ENCODE measurements at regions of chr6 and their contacts with region 1.

Region 1: GRCh38 chr6:105484238-105485161 is 81.6 kb upstream of the PREP start:
- DNase-seq: peak in 1 of 2 experiments; percentile 50
- H3K4me3 ChIP-seq: no peak overlapping the region
- H3K4me3 Mint-ChIP-seq: peak overlapping the region; percentile 63
- H3K27ac Mint-ChIP-seq: peak overlapping the region; percentile 42
- H3K4me1 ChIP-seq: peaks cover 36% of the 10 kb centered on the region
- H3K4me1 Mint-ChIP-seq: peaks cover 55% of the 10 kb centered on the region
- H3K27me3 ChIP-seq: no peaks in the 10 kb centered on the region
- H3K27me3 Mint-ChIP-seq: no peaks in the 10 kb centered on the region
- CTCF ChIP-seq: peak; percentile 75 to 85

Region 2: DNA sequence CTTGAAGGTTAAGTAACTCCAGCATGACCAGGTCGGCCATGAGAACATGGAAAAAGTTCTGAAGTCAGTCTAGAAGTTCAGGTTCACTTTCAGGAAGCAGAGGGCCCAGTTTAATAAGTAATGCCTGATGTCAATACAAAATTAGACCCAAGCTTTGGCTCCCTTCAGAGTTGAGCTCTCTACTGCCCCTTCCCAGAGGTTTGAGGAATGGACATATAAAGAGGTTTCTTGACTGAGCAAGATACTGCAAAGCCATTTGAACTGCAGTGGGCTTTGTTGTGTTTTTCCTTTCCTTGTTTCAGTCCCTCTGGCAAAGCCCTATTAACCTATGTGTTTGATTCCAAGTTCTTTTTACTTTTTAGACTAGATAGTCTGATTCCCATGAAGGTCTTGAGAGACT is 16.2 kb after region 1 on chr6:
- CTCF ChIA-PET with region 1: no interaction called
- POLR2A ChIA-PET with region 1: no interaction called
- intact Hi-C with region 1: no loop called
- DNase-seq: no peak
- H3K4me3 ChIP-seq: no peak overlapping the region
- H3K4me3 Mint-ChIP-seq: no peak overlapping the region
- H3K27ac Mint-ChIP-seq: no peak overlapping the region
- H3K4me1 ChIP-seq: no peaks in the 10 kb centered on the region
- H3K4me1 Mint-ChIP-seq: no peaks in the 10 kb centered on the region
- H3K27me3 ChIP-seq: no peaks in the 10 kb centered on the region
- H3K27me3 Mint-ChIP-seq: peaks cover 3% of the 10 kb centered on the region
- CTCF ChIP-seq: no peak

Region 3: GRCh38 chr6:105510746-105511145 is 26.2 kb after region 1 on chr6:
- CTCF ChIA-PET with region 1: no interaction called
- POLR2A ChIA-PET with region 1: no interaction called
- intact Hi-C with region 1: no loop called
- DNase-seq: no peak
- H3K4me3 ChIP-seq: no peak overlapping the region
- H3K4me3 Mint-ChIP-seq: no peak overlapping the region
- H3K27ac Mint-ChIP-seq: no peak overlapping the region
- H3K4me1 ChIP-seq: no peaks in the 10 kb centered on the region
- H3K4me1 Mint-ChIP-seq: peaks cover 6% of the 10 kb centered on the region
- H3K27me3 ChIP-seq: no peaks in the 10 kb centered on the region
- H3K27me3 Mint-ChIP-seq: no peaks in the 10 kb centered on the region
- CTCF ChIP-seq: no peak

Region 4: GRCh38 chr6:105569706-105570105 is 85.2 kb after region 1 on chr6:
- CTCF ChIA-PET with region 1: no interaction called
- POLR2A ChIA-PET with region 1: no interaction called
- intact Hi-C with region 1: loop called (anchors 2 kb)
- DNase-seq: peak in 1 of 2 experiments; percentile 72
- H3K4me3 ChIP-seq: no peak overlapping the region
- H3K4me3 Mint-ChIP-seq: no peak overlapping the region
- H3K27ac Mint-ChIP-seq: no peak overlapping the region
- H3K4me1 ChIP-seq: peaks cover 41% of the 10 kb centered on the region
- H3K4me1 Mint-ChIP-seq: peaks cover 27% of the 10 kb centered on the region
- H3K27me3 ChIP-seq: no peaks in the 10 kb centered on the region
- H3K27me3 Mint-ChIP-seq: peaks cover 8% of the 10 kb centered on the region
- CTCF ChIP-seq: no peak

Region 5: GRCh38 chr6:105733565-105734162 is 249.2 kb after region 1 on chr6:
- CTCF ChIA-PET with region 1: no interaction called
- POLR2A ChIA-PET with region 1: no interaction called
- intact Hi-C with region 1: loop called (anchors 1 kb)
- DNase-seq: no peak
- H3K4me3 ChIP-seq: no peak overlapping the region
- H3K4me3 Mint-ChIP-seq: no peak overlapping the region
- H3K27ac Mint-ChIP-seq: no peak overlapping the region
- H3K4me1 ChIP-seq: no peaks in the 10 kb centered on the region
- H3K4me1 Mint-ChIP-seq: peaks cover 6% of the 10 kb centered on the region
- H3K27me3 ChIP-seq: no peaks in the 10 kb centered on the region
- H3K27me3 Mint-ChIP-seq: no peaks in the 10 kb centered on the region
- CTCF ChIP-seq: peak; percentile 47 to 74

Region 6: DNA sequence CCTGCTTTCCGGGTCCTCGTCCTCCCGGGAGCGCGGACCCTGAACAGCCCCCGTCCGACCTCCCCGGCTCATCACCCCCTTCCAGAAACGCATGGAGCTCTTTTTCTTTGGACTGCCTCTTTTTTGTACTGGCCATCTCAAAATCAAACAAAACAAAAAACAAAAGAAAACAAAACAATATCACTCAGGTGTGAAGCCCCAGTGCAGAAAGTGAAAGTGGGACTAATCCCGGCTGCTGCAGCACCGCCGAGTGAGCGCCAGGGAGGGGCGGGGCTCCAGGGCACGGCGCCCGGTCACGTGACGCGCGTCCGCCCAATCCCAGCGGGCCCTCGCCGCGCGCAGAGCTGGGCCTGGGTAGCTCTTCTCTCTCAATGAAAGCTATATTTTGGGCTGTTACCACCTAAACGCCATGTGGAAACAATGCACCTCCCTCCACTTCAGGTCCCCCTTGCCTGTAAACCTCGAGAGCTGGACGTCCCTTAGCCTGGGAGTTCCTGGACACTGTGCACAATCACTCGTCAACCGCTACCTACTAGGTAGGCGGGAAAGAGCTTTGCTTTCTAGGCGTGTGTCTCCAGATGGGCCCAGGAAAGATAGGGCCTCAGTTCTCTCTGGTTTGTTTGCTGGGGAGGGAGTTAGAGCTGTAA is 507.9 kb after region 1 on chr6:
- CTCF ChIA-PET with region 1: no interaction called
- POLR2A ChIA-PET with region 1: no interaction called
- intact Hi-C with region 1: loop called (anchors 10 kb)
- DNase-seq: peak; percentile 75 to 88
- H3K4me3 ChIP-seq: peak overlapping the region; percentile 51
- H3K4me3 Mint-ChIP-seq: peak overlapping the region; percentile 73
- H3K27ac Mint-ChIP-seq: peak overlapping the region; percentile 73
- H3K4me1 ChIP-seq: peaks cover 16% of the 10 kb centered on the region; the same call in 1 of the 2 replicates
- H3K4me1 Mint-ChIP-seq: peaks cover 33% of the 10 kb centered on the region
- H3K27me3 ChIP-seq: no peaks in the 10 kb centered on the region
- H3K27me3 Mint-ChIP-seq: no peaks in the 10 kb centered on the region
- CTCF ChIP-seq: no peak

Region 7: GRCh38 chr6:106223300-106223930 is 738.9 kb after region 1 on chr6:
- CTCF ChIA-PET with region 1: no interaction called
- POLR2A ChIA-PET with region 1: no interaction called
- intact Hi-C with region 1: loop called (anchors 1 kb)
- DNase-seq: peak; percentile 54 to 65
- H3K4me3 ChIP-seq: no peak overlapping the region
- H3K4me3 Mint-ChIP-seq: no peak overlapping the region
- H3K27ac Mint-ChIP-seq: no peak overlapping the region
- H3K4me1 ChIP-seq: peaks cover 6% of the 10 kb centered on the region; the same call in 1 of the 2 replicates
- H3K4me1 Mint-ChIP-seq: peaks cover 21% of the 10 kb centered on the region
- H3K27me3 ChIP-seq: no peaks in the 10 kb centered on the region
- H3K27me3 Mint-ChIP-seq: no peaks in the 10 kb centered on the region
- CTCF ChIP-seq: peak; percentile 52 to 56

Region 8: DNA sequence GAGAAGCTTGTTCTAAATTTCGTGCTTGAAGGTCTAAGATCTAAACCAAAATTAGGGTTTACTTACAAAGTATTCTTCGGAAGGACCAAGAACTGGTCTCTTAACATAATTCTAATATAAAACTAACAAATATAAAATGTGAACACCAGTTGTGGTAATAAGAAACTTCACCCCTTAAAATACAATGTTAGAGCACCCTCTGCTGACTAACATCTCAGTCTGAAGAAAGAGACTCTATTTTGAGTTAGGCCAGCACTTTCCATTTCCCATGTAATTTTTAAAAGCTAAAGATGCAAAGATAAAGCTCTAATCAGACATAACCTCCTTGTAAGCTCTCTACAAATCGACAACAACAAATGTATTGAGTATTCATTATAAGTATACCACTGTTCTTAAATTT is 816.4 kb after region 1 on chr6:
- CTCF ChIA-PET with region 1: no interaction called
- POLR2A ChIA-PET with region 1: no interaction called
- intact Hi-C with region 1: loop called (anchors 2 kb)
- DNase-seq: peak in 1 of 2 experiments; percentile 24
- H3K4me3 ChIP-seq: no peak overlapping the region
- H3K4me3 Mint-ChIP-seq: no peak overlapping the region
- H3K27ac Mint-ChIP-seq: no peak overlapping the region
- H3K4me1 ChIP-seq: no peaks in the 10 kb centered on the region
- H3K4me1 Mint-ChIP-seq: no peaks in the 10 kb centered on the region
- H3K27me3 ChIP-seq: no peaks in the 10 kb centered on the region
- H3K27me3 Mint-ChIP-seq: no peaks in the 10 kb centered on the region
- CTCF ChIP-seq: peak; percentile 10 to 48